Calu3 (cell line): ENCODE measurements at regions of chr9 and their contacts with region 1.

Region 1: GRCh38 chr9:34437006-34437925 is 21.1 kb downstream of the FAM219A start:
- DNase-seq: peak; percentile 43
- H3K4me3 Mint-ChIP-seq: no peak overlapping the region
- H3K27ac Mint-ChIP-seq: no peak overlapping the region
- H3K4me1 Mint-ChIP-seq: peaks cover 8% of the 10 kb centered on the region
- H3K27me3 Mint-ChIP-seq: no peaks in the 10 kb centered on the region
- CTCF ChIP-seq: peak; percentile 57

Region 2: GRCh38 chr9:34500623-34501267 is 63.5 kb after region 1 on chr9:
- CTCF ChIA-PET with region 1: no interaction called
- intact Hi-C with region 1: loop called (anchors 1 kb)
- DNase-seq: peak; percentile 60
- H3K4me3 Mint-ChIP-seq: no peak overlapping the region
- H3K27ac Mint-ChIP-seq: no peak overlapping the region
- H3K4me1 Mint-ChIP-seq: no peaks in the 10 kb centered on the region
- H3K27me3 Mint-ChIP-seq: peaks cover 82% of the 10 kb centered on the region
- CTCF ChIP-seq: peak; percentile 80

Region 3: GRCh38 chr9:34546834-34547827 is 109.9 kb after region 1 on chr9:
- CTCF ChIA-PET with region 1: no interaction called
- intact Hi-C with region 1: loop called (anchors 1 kb)
- DNase-seq: peak; percentile 70
- H3K4me3 Mint-ChIP-seq: no peak overlapping the region
- H3K27ac Mint-ChIP-seq: no peak overlapping the region
- H3K4me1 Mint-ChIP-seq: no peaks in the 10 kb centered on the region
- H3K27me3 Mint-ChIP-seq: peaks cover 48% of the 10 kb centered on the region
- CTCF ChIP-seq: peak; percentile 61

Region 4: GRCh38 chr9:34591248-34591916 is 154.1 kb after region 1 on chr9:
- CTCF ChIA-PET with region 1: no interaction called
- intact Hi-C with region 1: loop called (anchors 5 kb)
- DNase-seq: peak; percentile 88
- H3K4me3 Mint-ChIP-seq: peak overlapping the region; percentile 65
- H3K27ac Mint-ChIP-seq: no peak overlapping the region
- H3K4me1 Mint-ChIP-seq: no peaks in the 10 kb centered on the region
- H3K27me3 Mint-ChIP-seq: peaks cover 85% of the 10 kb centered on the region
- CTCF ChIP-seq: peak; percentile 79